HCT116 (cell line): ENCODE measurements at regions of chr18 and their contacts with region 1.

Region 1: DNA sequence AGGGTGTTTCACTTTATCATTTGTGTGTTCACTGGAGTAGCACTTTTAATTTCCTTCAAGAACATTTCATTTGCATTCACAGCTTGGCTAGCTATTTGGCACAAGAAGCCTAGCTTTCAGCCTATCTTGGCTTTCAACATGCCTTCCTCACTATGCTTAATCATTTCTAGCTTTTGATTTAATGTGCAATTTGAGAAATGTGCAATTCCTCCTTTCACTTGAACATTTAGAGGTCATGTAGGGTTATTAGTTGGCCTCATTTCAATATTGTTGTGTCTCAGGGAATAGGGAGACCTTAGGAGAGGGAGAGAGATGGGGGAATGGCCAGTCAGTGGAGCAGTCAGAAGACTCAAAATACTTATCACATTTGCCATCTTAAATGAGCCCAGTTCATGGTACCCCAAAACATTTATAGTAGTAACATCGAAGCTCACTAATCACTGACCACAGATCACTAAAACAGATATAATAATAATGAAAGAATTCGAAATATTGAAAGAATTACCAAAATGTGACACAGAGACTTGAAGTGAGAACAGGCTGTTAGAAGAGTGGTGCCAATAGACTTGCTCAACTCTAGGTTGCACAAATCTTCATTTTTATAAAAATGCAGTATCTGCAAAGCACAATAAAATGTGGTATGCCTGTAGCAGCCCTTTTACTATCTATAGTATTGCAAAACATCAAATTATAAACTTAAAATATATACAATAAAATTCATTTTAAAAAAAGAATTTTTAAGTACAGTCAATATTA is 561.2 kb downstream of the METTL4 start:
- DNase-seq: no peak
- ATAC-seq: no peak
- H3K4me3 ChIP-seq: no peak overlapping the region
- H3K27ac ChIP-seq: no peak overlapping the region
- H3K4me1 ChIP-seq: no peaks in the 10 kb centered on the region
- H3K27me3 ChIP-seq: no peaks in the 10 kb centered on the region; the same call in 1 of the 2 replicates
- CTCF ChIP-seq: no peak
- POLR2A ChIP-seq: no peak
- RAD21 ChIP-seq: no peak

Region 2: DNA sequence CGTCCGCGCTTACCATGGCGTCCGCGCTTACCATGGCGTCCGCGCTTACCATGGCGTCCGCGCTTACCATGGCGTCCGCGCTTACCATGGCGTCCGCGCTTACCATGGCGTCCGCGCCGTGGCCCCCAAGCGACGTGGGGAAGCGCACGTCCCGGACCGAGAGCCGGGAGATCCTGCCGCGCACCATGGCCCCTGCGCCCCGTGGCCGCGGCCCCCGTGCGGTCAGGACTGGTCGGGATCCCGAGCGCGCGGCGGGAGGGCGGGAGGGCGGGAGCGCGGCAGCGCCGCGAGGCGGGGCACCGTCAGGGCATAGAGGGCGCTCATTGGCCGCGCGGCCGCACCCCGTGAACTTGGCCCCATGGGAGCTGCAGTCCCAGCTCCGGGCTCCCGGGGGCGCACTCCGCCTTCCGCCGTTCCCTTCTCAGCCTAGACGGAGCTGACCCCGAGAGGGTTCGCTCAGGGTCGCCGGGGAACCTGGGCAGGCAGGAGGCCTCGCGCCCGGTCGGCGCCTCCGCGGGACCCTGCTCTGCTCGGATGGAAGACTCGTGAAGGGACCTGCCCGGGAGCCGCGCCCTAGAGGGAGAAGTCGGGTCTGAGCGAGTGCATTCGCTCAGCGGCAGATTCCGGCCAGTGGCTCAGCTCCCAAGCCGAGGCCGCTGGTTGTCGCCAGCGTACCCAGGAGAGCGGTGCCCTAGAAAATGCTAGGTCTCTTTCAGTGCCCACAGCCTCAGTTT is 1297.6 kb before region 1 on chr18 and contains the start of gene ENOSF1:
- CTCF ChIA-PET with region 1: no interaction called
- POLR2A ChIA-PET with region 1: no interaction called
- RAD21 ChIA-PET with region 1: no interaction called
- intact Hi-C with region 1: no loop called
- DNase-seq: peak; percentile 54
- ATAC-seq: peak; percentile 98
- H3K4me3 ChIP-seq: peak within 1 kb of the TSS; percentile 65 to 82
- H3K27ac ChIP-seq: peak within 1 kb of the TSS; percentile 70
- H3K4me1 ChIP-seq: peaks cover 2 to 12% of the 10 kb centered on the region in 2 experiments; a peak in 3 of 4 replicates
- H3K27me3 ChIP-seq: no peaks in the 10 kb centered on the region
- CTCF ChIP-seq: peak; percentile 60 to 79 (median 63); a peak in 5 of 6 replicates
- POLR2A ChIP-seq: peak; percentile 58
- RAD21 ChIP-seq: peak; percentile 49; the same call in 1 of the 2 replicates
- total RNA-seq, gene ENOSF1: 90.0 TPM

Region 3: DNA sequence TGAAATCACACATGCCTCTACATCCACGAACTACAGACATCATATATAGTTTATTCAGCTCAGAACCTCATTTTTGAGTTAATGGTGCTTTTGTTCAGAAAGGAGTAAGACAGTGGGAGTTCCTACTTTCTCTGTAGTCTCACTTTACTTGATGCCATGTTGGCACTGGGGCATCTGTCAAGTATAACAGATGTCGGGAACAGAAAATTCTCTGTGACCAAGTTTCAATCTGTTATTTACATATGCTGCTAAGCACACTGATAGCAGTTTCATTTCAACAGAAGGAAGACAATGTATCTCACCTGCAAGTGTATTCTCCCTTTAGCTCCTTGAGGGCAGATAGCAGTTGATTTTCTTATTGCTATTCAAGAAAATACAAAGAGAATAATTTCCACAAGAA is 212.9 kb before region 1 on chr18:
- CTCF ChIA-PET with region 1: no interaction called
- POLR2A ChIA-PET with region 1: no interaction called
- RAD21 ChIA-PET with region 1: no interaction called
- intact Hi-C with region 1: no loop called
- DNase-seq: no peak
- ATAC-seq: no peak
- H3K4me3 ChIP-seq: no peak overlapping the region
- H3K27ac ChIP-seq: no peak overlapping the region
- H3K4me1 ChIP-seq: no peaks in the 10 kb centered on the region
- H3K27me3 ChIP-seq: no peaks in the 10 kb centered on the region
- CTCF ChIP-seq: no peak
- POLR2A ChIP-seq: no peak
- RAD21 ChIP-seq: no peak

Region 4: GRCh38 chr18:1954583-1955312 is 55.4 kb before region 1 on chr18:
- CTCF ChIA-PET with region 1: no interaction called
- POLR2A ChIA-PET with region 1: no interaction called
- RAD21 ChIA-PET with region 1: no interaction called
- intact Hi-C with region 1: loop called (anchors 10 kb)
- DNase-seq: no peak
- ATAC-seq: no peak
- H3K4me3 ChIP-seq: no peak overlapping the region
- H3K27ac ChIP-seq: no peak overlapping the region
- H3K4me1 ChIP-seq: no peaks in the 10 kb centered on the region
- H3K27me3 ChIP-seq: no peaks in the 10 kb centered on the region
- CTCF ChIP-seq: no peak
- POLR2A ChIP-seq: no peak
- RAD21 ChIP-seq: no peak

Region 5: GRCh38 chr18:2173464-2173863 is 163.3 kb after region 1 on chr18:
- CTCF ChIA-PET with region 1: no interaction called
- POLR2A ChIA-PET with region 1: no interaction called
- RAD21 ChIA-PET with region 1: no interaction called
- intact Hi-C with region 1: no loop called
- DNase-seq: no peak
- ATAC-seq: no peak
- H3K4me3 ChIP-seq: no peak overlapping the region
- H3K27ac ChIP-seq: no peak overlapping the region
- H3K4me1 ChIP-seq: no peaks in the 10 kb centered on the region
- H3K27me3 ChIP-seq: 0 out of 2 replicates have a peak, but pooled peaks cover 3% of the 10 kb centered on the region
- CTCF ChIP-seq: no peak
- POLR2A ChIP-seq: no peak
- RAD21 ChIP-seq: no peak